ENCODE measurements at regions of chr11 and their contacts with region 1.

Region 1: GRCh38 chr11:13486926-13487660 is 8.7 kb downstream of the PTH start:
- DNase-seq: peak; percentile 60
- ATAC-seq: peak; percentile 55

Region 2: GRCh38 chr11:12122083-12122482 is 1365.0 kb before region 1 on chr11:
- intact Hi-C with region 1: no loop called
- DNase-seq: no peak
- ATAC-seq: no peak

Region 3: GRCh38 chr11:14269692-14270573 is 782.8 kb after region 1 on chr11:
- intact Hi-C with region 1: loop called (anchors 10 kb)
- DNase-seq: no peak
- ATAC-seq: no peak

Measured in sciatic nerve (tissue), 2 donors.